ENCODE measurements at regions of chr19 and their contacts with region 1.

Region 1: GRCh38 chr19:54573330-54573872 is at the start of gene LILRA2:
- DNase-seq: no peak
- ATAC-seq: peak; percentile 98
- H3K4me3 ChIP-seq: no peak within 1 kb of the TSS; the same call in 1 of the 2 replicates
- H3K27ac ChIP-seq: no peak within 1 kb of the TSS
- H3K4me1 ChIP-seq: peaks cover 20% of the 10 kb centered on the region
- H3K27me3 ChIP-seq: no peaks in the 10 kb centered on the region; a peak in 1 of 4 replicates
- CTCF ChIP-seq: no peak
- EP300 ChIP-seq: no peak
- POLR2A ChIP-seq: no peak
- RAD21 ChIP-seq: no peak
- polyA plus RNA-seq, gene LILRA2: 0.16 to 0.24 TPM

Region 2: DNA sequence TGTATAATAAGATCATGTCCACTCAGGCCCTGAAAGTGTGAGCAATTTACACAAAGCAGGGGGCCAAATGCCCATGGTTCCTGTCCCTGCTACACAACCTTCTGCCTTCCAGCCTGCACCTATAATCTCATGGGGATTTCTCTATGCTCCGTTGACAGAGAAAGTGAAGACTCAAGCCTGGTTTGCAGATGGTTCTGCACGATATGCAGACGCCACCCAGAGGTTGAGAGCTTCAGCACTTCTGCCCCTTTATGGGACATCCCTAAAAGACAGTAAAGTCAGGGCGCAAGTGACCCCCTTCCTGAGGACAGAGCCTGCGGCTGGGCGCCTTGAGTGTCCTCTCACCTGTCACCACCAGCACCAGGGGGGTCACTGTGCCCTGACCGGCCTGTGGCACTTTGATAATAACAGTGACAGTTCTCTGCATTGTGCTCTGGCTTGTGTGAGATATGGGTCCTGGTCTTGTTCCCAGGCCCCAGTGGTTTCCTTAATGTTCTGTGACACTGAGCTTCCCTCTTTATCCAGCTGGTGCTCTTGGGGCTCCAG is 275.6 kb before region 1 on chr19:
- CTCF ChIA-PET with region 1: no interaction called
- POLR2A ChIA-PET with region 1: no interaction called
- RAD21 ChIA-PET with region 1: no interaction called
- SMC1A ChIA-PET with region 1: no interaction called
- in situ Hi-C with region 1: loop called (anchors 5 kb)
- intact Hi-C with region 1: no loop called
- DNase-seq: no peak
- ATAC-seq: peak; percentile 40; the same call in 1 of the 3 replicates
- H3K4me3 ChIP-seq: no peak overlapping the region
- H3K27ac ChIP-seq: no peak overlapping the region
- H3K4me1 ChIP-seq: no peaks in the 10 kb centered on the region
- H3K27me3 ChIP-seq: peaks cover 0 to 4% of the 10 kb centered on the region in 2 experiments; a peak in 3 of 4 replicates
- CTCF ChIP-seq: peak in 2 of 3 experiments; percentile 12 to 31; a peak in 4 of 6 replicates
- EP300 ChIP-seq: no peak
- POLR2A ChIP-seq: no peak
- RAD21 ChIP-seq: peak; percentile 46; the same call in 1 of the 2 replicates

Region 3: DNA sequence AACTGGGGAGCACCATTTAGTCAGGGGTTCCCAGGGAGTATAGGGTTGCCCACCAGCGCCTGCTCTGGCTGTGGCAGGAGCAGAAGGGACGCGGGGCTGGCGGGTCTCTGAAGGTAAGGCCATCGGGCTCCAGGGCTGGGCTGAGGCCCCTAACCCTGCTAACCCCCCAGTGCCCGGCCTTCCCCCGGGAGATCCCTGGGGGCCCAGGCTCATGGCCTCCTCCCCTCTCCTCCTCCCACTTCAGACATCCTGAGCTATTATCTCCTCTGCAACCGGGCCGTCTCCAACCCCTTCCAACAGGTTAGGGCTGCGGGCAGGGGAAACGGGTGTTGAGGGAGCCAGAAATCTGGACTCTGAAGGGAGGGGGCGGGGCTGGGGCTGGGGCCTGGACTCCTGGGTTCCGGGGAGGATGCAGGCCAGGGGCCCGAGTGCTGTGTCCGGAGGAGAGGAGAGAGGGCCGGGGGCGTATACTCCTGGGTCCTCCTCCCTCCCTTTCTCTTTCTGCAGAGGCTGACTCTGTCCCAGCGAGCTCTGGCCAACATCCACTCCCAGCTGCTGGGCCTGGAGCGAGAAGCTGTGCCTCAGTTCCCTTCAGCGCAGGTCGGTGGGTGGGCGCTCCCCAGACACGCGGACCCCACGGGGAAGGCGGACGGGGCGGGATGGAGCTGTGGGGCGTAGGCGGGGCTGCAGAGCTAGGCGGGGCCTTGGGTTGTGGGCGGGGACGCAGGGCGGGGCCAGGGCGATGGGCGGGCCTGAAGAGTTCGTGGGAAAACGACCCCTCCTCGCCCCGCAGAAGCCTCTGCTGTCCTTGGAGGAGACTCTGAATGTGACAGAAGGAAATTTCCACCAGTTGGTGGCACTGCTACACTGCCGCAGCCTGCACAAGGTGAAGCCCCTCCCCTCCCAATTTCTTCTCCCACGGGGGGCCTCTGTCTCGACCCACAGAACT is 142.8 kb before region 1 on chr19:
- CTCF ChIA-PET with region 1: no interaction called
- POLR2A ChIA-PET with region 1: no interaction called
- RAD21 ChIA-PET with region 1: no interaction called
- SMC1A ChIA-PET with region 1: no interaction called
- in situ Hi-C with region 1: no loop called
- intact Hi-C with region 1: no loop called
- DNase-seq: no peak
- ATAC-seq: peak; percentile 89
- H3K4me3 ChIP-seq: no peak overlapping the region
- H3K27ac ChIP-seq: no peak overlapping the region
- H3K4me1 ChIP-seq: no peaks in the 10 kb centered on the region
- H3K27me3 ChIP-seq: no peaks in the 10 kb centered on the region; a peak in 1 of 4 replicates
- CTCF ChIP-seq: peak in 1 of 3 experiments; percentile 38; a peak in 1 of 6 replicates
- EP300 ChIP-seq: no peak
- POLR2A ChIP-seq: peak; percentile 31; the same call in 1 of the 2 replicates
- RAD21 ChIP-seq: no peak

Region 4: DNA sequence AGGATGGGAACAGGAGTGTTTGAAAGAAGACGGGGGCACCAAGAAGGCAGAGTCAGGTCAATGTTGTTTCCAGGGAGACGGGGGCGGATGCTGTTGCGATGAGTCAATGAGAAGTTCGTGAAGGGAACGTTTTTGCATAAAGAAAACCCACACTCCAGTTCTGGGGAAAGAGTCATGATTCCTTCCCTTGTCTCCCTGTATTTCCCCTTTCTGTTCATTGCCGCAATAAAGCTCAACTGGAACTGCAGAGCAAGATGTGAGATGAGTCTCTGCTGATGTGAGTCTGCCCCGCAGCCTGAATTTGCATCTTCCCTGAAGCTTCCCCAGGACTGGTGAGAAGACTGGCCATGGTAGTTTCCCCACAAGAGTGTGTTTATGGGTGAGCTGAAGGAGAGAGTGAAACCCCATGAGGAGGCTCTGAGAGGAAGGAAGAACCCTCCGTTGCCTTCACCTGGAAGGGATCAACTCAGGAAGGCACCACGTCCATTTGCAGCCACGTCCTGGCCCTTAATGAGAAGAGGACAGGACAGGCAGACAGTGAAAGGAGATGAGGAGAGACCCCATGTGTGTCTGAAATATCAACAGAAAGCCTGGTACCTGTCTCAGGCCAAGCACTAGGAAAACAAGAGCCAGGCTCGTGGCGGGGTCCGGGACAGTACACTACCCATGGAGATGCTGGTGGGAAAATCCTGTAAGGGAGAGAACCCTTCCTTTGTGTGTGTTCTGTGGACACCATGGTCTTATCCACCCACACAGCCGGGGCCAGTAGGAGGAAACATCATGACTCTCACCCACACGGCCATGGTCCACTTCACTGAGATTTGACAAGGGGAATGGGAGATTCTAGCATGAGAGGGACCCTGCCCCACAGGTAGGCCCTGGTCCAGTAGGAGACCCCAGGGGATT is 33.7 kb after region 1 on chr19:
- CTCF ChIA-PET with region 1: no interaction called
- POLR2A ChIA-PET with region 1: no interaction called
- RAD21 ChIA-PET with region 1: no interaction called
- SMC1A ChIA-PET with region 1: no interaction called
- in situ Hi-C with region 1: no loop called
- intact Hi-C with region 1: loop called (anchors 5 kb)
- DNase-seq: peak; percentile 66
- ATAC-seq: peak; percentile 88
- H3K4me3 ChIP-seq: peak overlapping the region; percentile 9; the same call in 1 of the 2 replicates
- H3K27ac ChIP-seq: peak overlapping the region; percentile 84
- H3K4me1 ChIP-seq: peaks cover 32% of the 10 kb centered on the region
- H3K27me3 ChIP-seq: no peaks in the 10 kb centered on the region
- CTCF ChIP-seq: no peak
- EP300 ChIP-seq: no peak
- POLR2A ChIP-seq: no peak
- RAD21 ChIP-seq: no peak

Measured in GM12878 (cell line).